GM23248 (cell line): ENCODE measurements at regions of chr22 and their contacts with region 1.

Region 1: GRCh38 chr22:42437488-42438292 is 5.5 kb upstream of the NFAM1 start:
- DNase-seq: peak; percentile 61
- H3K4me3 ChIP-seq: peak overlapping the region; percentile 78
- H3K27ac ChIP-seq: no peak overlapping the region
- H3K4me1 ChIP-seq: 0 out of 2 replicates have a peak, but pooled peaks cover 3% of the 10 kb centered on the region
- H3K27me3 ChIP-seq: peaks cover 21% of the 10 kb centered on the region

Region 2: DNA sequence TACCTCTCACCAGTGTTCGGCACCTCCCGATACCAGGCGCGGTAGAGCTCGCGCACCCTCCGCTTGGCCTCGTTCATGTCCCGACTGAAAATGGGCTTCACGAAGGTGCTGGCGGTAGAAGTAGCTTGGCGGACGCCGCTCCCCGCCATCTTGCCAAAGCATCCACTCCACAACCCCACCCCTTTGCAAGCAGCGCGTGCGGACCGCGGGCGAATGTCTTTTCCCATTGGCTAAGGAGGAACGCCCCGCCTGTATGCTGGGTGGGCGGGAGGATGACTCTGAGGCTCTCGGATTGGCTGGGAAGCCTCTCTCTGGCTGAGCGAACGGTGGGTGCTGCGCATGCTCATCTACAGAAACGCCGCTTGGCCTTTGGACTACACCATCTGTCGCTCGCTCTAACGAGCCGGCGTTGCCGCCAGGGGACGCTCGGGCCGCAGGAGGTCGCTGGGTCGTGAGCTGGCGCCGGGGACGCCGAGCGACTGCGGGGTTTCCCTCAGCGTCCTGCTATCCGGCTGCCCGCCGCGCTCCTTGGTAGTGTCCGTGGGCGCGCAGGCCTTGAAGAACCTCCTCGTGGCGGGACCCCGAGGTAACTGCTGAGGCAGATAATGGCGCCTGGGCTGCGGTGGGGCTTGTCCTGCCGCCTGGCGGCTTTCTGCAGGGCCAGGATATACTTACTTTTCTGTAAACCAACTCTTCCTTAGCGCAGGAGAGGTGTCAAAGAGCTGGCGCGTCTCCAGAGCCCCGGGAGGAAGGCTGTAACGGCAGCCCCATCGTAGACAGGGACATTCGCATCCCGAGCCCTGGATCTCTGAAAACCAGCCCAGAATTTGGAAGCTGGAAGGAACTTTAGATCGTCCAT is 346.9 kb before region 1 on chr22 and contains the start of gene NDUFA6:
- in situ Hi-C with region 1: loop called (anchors 10 kb)
- DNase-seq: peak; percentile 100
- H3K4me3 ChIP-seq: peak within 1 kb of the TSS; percentile 95
- H3K27ac ChIP-seq: peak within 1 kb of the TSS; percentile 94
- H3K4me1 ChIP-seq: 0 out of 2 replicates have a peak, but pooled peaks cover 3% of the 10 kb centered on the region
- H3K27me3 ChIP-seq: no peaks in the 10 kb centered on the region
- total RNA-seq, gene NDUFA6: 56.3 and 63.2 TPM in 2 replicates

Region 3: GRCh38 chr22:42134100-42135020 is 303.3 kb before region 1 on chr22:
- in situ Hi-C with region 1: no loop called
- DNase-seq: no peak
- H3K4me3 ChIP-seq: no peak overlapping the region
- H3K27ac ChIP-seq: no peak overlapping the region
- H3K4me1 ChIP-seq: no peaks in the 10 kb centered on the region
- H3K27me3 ChIP-seq: no peaks in the 10 kb centered on the region

Region 4: DNA sequence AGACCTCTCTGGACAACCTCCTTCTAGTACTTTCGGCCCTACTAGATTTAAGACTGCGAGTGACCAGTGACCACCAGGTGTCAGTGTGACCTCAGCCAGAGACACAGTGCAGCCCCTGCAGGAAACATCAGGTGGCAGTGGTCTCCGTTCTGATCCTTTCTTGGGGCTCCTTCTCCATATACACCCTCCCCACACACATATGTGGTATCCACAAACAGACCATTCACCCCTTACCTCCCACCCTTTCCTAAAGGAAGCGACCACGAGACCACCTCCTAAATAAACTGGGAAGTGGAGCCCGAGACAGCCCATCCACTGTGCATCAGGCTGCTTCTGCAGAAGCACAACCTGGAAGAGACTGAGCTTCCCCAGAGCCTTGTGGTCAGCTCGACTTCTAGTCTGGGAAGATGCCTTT is 268.6 kb before region 1 on chr22:
- in situ Hi-C with region 1: loop called (anchors 10 kb)
- DNase-seq: peak; percentile 68
- H3K4me3 ChIP-seq: no peak overlapping the region
- H3K27ac ChIP-seq: no peak overlapping the region
- H3K4me1 ChIP-seq: peaks cover 7% of the 10 kb centered on the region; the same call in 1 of the 2 replicates
- H3K27me3 ChIP-seq: no peaks in the 10 kb centered on the region

Region 5: DNA sequence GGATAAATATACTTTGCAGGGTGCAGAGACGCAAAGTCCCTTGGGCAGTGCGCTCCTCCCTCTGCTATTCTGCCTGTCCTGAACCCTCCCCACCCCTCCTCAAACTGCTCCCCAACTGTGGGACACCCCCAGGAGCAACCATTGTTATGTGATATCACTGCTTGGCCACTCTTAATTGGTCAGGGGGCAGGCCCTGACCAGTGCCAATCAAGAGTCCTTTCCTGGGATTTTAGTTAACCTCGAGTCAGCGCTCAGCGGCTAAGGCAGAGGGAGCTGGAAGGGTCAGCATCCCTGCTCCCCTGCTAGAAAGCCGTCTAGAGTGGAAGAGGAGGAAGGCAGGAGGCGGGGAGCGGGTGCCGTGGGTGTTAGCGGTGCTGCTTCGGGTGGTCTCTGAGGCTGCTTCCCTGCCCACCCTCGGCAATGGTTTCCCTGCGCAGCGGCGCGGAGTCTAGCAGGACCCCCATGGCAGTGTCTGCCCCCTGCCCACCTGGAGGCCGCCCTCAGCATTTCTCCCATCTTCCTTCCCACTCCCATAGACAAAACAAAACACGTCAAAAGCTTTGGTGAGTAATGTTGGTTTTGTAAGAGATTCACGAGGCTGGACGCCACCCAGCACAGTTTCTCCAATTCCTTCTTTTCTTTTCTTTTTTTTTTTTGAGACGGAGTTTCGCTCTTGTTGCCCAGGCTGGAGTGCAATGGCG is 321.4 kb after region 1 on chr22:
- in situ Hi-C with region 1: no loop called
- DNase-seq: peak; percentile 78
- H3K4me3 ChIP-seq: no peak overlapping the region
- H3K27ac ChIP-seq: 0 out of 2 replicates have a peak overlapping the region, but pooled peaks have one; percentile 9
- H3K4me1 ChIP-seq: peaks cover 4% of the 10 kb centered on the region; the same call in 1 of the 2 replicates
- H3K27me3 ChIP-seq: no peaks in the 10 kb centered on the region